ENCODE measurements at regions of chr4 and their contacts with region 1.

Region 1: GRCh38 chr4:256492-256891 is 48.8 kb downstream of the ZNF732 start:
- DNase-seq: no peak
- H3K4me3 ChIP-seq: no peak overlapping the region
- H3K27ac ChIP-seq: no peak overlapping the region
- H3K4me1 ChIP-seq: no peaks in the 10 kb centered on the region
- H3K27me3 ChIP-seq: no peaks in the 10 kb centered on the region
- CTCF ChIP-seq: no peak
- POLR2A ChIP-seq: no peak

Region 2: GRCh38 chr4:188076-188475 is 68.4 kb before region 1 on chr4:
- intact Hi-C with region 1: no loop called
- DNase-seq: no peak
- H3K4me3 ChIP-seq: no peak overlapping the region
- H3K27ac ChIP-seq: no peak overlapping the region
- H3K4me1 ChIP-seq: no peaks in the 10 kb centered on the region
- H3K27me3 ChIP-seq: no peaks in the 10 kb centered on the region
- CTCF ChIP-seq: no peak
- POLR2A ChIP-seq: no peak

Region 3: GRCh38 chr4:212438-213188 is 43.9 kb before region 1 on chr4:
- intact Hi-C with region 1: no loop called
- DNase-seq: peak; percentile 85 to 87
- H3K4me3 ChIP-seq: peak overlapping the region; percentile 63 to 73 (median 72)
- H3K27ac ChIP-seq: peak overlapping the region in 2 of 3 donors; percentile 30 to 73
- H3K4me1 ChIP-seq: peaks cover 6 to 7% of the 10 kb centered on the region in 2 donors
- H3K27me3 ChIP-seq: no peaks in the 10 kb centered on the region
- CTCF ChIP-seq: no peak
- POLR2A ChIP-seq: peak in 1 of 2 donors; percentile 70

Region 4: GRCh38 chr4:337143-337931 is 80.8 kb after region 1 on chr4 and contains the start of gene ZNF141:
- intact Hi-C with region 1: no loop called
- DNase-seq: peak; percentile 98
- H3K4me3 ChIP-seq: peak within 1 kb of the TSS; percentile 68 to 96 (median 96)
- H3K27ac ChIP-seq: peak within 1 kb of the TSS; percentile 90 to 98 (median 94)
- H3K4me1 ChIP-seq: peaks cover 10 to 16% of the 10 kb centered on the region in 2 donors
- H3K27me3 ChIP-seq: no peaks in the 10 kb centered on the region
- CTCF ChIP-seq: no peak
- POLR2A ChIP-seq: peak; percentile 49 to 84
- total RNA-seq, gene ZNF141: 38.8 to 63.4 (median 46.3) TPM

Region 5: DNA sequence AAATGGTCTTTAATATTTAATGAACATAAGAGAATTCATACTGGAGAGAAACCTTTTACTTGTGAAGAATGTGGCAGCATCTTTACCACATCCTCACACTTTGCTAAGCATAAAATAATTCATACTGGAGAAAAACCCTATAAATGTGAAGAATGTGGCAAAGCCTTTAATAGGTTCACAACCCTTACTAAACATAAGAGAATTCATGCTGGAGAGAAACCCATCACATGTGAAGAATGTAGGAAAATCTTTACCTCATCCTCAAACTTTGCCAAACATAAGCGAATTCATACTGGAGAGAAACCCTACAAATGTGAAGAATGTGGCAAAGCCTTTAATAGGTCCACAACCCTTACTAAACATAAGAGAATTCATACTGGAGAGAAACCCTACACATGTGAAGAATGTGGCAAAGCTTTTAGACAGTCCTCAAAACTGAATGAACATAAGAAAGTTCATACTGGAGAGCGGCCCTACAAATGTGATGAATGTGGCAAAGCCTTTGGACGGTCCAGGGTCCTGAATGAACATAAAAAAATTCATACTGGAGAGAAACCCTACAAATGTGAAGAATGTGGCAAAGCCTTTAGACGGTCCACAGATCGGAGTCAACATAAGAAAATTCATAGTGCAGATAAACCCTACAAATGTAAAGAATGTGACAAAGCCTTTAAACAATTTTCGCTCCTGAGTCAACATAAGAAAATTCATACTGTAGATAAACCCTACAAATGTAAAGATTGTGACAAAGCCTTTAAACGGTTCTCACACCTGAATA is 116.8 kb after region 1 on chr4:
- intact Hi-C with region 1: loop called (anchors 10 kb)
- DNase-seq: no peak
- H3K4me3 ChIP-seq: no peak overlapping the region
- H3K27ac ChIP-seq: no peak overlapping the region
- H3K4me1 ChIP-seq: no peaks in the 10 kb centered on the region
- H3K27me3 ChIP-seq: no peaks in the 10 kb centered on the region
- CTCF ChIP-seq: no peak
- POLR2A ChIP-seq: no peak